ENCODE measurements at regions of chr11 and their contacts with region 1.

Region 1: DNA sequence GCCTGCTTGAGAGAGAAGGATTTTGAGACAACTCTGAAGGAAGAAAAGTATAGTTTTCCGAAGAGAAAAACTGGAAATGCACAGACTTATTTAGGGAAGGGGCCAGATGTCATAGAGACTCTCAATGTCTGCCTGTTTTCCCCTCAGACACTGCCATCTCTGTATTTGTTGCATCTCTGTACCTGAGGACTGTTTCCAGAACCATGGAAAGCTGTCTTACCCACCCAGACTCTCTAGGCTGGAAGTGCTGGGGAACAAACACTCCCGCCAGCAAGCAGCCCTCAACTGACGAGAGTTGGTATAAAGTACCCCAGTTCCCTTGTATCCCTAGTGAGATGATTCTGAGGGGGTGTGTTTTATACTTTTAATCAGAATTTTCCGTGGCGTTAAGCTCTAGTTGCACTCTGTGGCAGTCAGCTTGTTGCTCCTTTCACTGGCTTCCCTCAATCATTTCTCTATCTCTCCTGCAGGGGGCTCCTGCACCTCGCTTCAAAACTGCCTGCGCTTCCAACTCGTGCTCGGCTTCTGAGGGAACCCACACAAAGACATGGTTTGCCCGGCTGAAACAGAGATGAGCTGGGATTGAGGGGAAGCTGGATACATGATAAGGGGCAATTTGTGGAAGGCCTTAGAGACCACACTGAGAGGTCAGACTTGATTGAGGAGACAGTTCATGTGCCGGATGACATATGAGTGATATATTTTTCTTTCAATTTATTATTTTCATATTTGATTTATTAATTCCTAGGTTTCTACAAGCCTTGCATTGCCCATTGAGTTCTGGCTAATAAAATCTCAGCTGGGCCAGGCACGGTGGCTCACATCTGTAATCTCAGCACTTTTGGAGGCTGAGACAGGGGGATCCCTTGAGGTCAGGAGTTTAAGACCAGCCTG is 36.9 kb upstream of the CLPB start:
- DNase-seq: peak; percentile 84

Region 2: DNA sequence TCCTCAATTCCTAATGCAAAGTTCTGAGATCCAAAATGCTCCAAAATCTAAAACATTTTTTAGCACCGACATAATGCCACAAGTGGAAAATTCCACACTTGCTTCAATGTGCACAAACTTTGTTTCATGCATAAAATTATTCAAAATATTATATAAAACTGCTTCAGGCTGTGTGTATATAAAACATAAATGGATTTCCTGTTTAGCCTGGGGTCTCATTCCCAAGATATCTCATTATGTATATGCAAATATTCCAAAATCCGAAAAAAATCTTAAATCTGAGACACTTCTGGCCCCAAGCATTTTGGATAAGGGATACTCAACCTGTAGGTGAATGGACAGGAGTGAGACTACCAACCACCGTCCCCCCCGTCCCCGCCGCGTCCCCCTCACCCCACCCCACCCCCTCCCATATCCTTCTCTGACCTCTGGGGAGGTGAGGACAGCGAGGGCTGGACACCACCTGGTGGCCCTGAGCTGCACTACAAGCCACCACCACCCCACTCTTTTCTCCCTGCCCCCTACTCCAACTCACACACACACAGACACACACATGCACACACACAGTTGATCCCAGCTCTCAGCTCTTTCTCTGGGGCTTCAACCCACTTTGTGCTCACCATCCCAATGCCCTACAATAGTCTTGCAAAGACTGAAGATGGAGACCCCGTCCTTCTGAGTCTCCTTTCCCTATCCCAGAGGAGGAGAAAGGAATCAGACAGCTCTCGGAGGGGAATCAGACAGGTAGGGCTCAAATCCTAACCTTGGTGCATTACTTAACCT is 102.0 kb after region 1 on chr11:
- intact Hi-C with region 1: loop called (anchors 10 kb)
- DNase-seq: no peak

Region 3: DNA sequence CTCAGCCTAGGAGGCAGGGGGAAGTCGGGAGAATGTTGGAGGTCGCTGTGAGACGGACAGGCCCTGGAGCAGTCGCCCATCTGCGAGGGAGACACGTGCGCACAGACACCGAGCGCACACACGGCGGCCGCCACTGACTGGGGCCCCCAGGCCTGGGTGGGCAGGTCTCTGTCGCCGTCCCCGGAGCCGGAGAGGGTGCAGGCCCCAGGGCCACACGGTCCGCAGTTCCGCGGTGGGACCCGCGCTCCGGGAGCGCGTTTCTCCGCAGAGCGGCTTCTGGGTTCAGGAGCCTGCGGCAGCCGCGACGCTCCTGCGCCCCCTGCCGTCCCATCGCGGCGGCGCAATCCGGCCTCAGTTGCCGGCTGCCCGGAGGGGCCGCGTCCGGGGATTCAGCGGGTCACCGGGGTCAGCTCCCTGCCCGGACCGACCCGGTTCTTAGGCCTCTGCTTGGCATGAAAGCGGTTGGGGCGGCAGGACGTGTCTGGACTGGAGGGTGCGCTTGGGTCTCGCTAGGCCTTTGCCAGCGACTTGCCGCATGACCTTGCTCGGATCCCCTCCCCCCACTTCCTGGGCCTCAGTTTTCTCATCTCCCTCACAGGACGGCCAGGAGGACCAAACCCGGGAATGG is 171.7 kb after region 1 on chr11:
- intact Hi-C with region 1: loop called in 1 of 2 experiments (anchors 10 kb)
- DNase-seq: peak; percentile 89

Region 4: GRCh38 chr11:72676861-72677341 is 205.6 kb after region 1 on chr11:
- intact Hi-C with region 1: loop called in 1 of 2 experiments (anchors 10 kb)
- DNase-seq: peak; percentile 90